ENCODE measurements at regions of chr18 and their contacts with region 1.

Region 1: DNA sequence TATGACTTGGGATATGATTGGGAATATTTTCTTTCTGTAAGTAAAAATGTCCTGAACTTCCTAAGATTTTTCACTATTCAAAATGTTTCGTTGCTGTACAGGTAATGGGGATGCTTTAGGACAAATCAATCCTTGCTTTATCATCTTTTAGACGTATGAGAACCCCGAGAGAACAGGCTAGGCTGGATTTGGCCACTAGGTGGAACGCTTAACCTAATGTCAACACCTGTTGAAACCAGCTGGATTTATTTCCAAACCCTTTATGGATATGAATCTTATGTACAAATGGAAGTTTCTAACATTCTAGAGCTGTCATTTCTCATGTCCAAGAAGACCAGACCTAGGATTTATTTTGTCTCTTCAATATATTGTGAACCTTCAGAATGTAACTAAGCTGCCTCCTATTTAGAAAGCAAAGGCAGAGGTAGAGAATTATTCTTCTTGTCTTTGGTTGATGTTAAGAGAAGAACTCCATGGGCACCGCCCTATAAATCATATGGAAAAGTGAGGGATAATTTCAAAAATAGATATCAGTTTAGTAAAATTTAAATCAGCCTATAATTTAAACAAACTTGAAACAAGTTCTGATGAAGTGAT is 96.7 kb downstream of the PMAIP1 start:
- DNase-seq: peak; percentile 41
- ATAC-seq: no peak; the same call in 1 of the 2 replicates
- H3K4me3 ChIP-seq: no peak overlapping the region
- H3K27ac ChIP-seq: no peak overlapping the region
- H3K4me1 ChIP-seq: no peaks in the 10 kb centered on the region
- H3K27me3 ChIP-seq: no peaks in the 10 kb centered on the region
- CTCF ChIP-seq: peak; percentile 51; the same call in 1 of the 2 replicates

Region 2: DNA sequence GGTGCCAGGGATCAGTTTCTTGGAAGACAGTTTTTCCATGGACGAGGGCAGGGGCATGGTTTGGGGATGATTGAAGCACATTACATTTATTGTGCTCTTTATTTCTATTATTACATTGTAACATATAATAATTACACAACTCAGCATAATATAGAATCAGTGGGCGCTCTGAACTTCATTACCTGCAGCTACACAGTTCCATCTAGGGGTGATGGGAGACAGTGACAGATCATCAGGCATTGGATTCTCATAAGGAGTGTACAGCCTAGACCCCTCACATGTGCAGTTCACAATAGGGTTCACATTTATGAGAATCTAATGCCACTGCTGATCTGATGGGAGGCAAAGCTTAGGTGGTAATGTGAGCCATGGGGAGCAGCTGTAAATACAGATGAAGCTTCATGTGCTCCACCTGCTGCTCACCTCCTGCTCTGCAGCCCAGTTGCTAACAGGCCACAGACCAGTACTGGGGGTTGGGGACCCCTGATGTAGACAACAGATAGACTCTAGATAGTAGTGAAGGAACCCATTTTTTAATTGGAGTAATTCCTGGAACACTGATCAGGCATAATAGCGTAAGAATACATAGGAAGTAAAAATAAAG is 417.6 kb after region 1 on chr18:
- CTCF ChIA-PET with region 1: no interaction called
- POLR2A ChIA-PET with region 1: no interaction called
- in situ Hi-C with region 1: no loop called
- intact Hi-C with region 1: loop called (anchors 5 kb)
- DNase-seq: peak; percentile 13
- ATAC-seq: no peak
- H3K4me3 ChIP-seq: no peak overlapping the region
- H3K27ac ChIP-seq: no peak overlapping the region
- H3K4me1 ChIP-seq: no peaks in the 10 kb centered on the region
- H3K27me3 ChIP-seq: no peaks in the 10 kb centered on the region
- CTCF ChIP-seq: peak; percentile 61